ENCODE measurements at regions of chr1 and their contacts with region 1.

Region 1: DNA sequence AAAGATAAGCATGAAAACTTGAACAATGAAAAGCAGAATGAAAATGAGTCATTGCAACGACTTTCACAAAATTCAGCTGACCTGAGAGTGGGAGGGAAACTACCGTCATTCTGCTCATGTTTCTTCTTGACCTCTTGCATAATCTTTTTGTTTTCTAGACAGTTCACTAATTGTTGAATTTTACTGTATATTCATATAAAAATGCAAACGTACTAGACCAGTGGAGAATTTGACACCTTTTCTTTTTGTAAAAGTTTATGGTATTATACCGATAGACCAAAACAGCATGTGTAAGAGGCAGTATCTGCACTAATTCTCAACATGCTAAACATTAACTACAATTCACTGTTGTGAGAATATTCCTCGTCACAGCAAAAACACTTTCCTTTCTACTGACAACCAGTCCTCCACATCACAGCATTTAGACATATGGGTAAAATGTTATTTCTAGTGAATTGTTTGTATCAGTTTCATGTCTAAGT is 137.8 kb downstream of the GREM2 start:
- DNase-seq: peak in 1 of 2 experiments; percentile 30
- H3K4me3 ChIP-seq: no peak overlapping the region
- H3K4me3 Mint-ChIP-seq: peak overlapping the region; percentile 33
- H3K27ac Mint-ChIP-seq: peak overlapping the region; percentile 54
- H3K4me1 ChIP-seq: peaks cover 26% of the 10 kb centered on the region
- H3K4me1 Mint-ChIP-seq: peaks cover 13% of the 10 kb centered on the region
- H3K27me3 ChIP-seq: no peaks in the 10 kb centered on the region
- H3K27me3 Mint-ChIP-seq: no peaks in the 10 kb centered on the region
- CTCF ChIP-seq: no peak

Region 2: GRCh38 chr1:240332672-240333071 is 141.5 kb before region 1 on chr1:
- CTCF ChIA-PET with region 1: no interaction called
- POLR2A ChIA-PET with region 1: no interaction called
- intact Hi-C with region 1: no loop called
- DNase-seq: no peak
- H3K4me3 ChIP-seq: no peak overlapping the region
- H3K4me3 Mint-ChIP-seq: no peak overlapping the region
- H3K27ac Mint-ChIP-seq: no peak overlapping the region
- H3K4me1 ChIP-seq: no peaks in the 10 kb centered on the region
- H3K4me1 Mint-ChIP-seq: no peaks in the 10 kb centered on the region
- H3K27me3 ChIP-seq: no peaks in the 10 kb centered on the region
- H3K27me3 Mint-ChIP-seq: no peaks in the 10 kb centered on the region
- CTCF ChIP-seq: no peak

Region 3: DNA sequence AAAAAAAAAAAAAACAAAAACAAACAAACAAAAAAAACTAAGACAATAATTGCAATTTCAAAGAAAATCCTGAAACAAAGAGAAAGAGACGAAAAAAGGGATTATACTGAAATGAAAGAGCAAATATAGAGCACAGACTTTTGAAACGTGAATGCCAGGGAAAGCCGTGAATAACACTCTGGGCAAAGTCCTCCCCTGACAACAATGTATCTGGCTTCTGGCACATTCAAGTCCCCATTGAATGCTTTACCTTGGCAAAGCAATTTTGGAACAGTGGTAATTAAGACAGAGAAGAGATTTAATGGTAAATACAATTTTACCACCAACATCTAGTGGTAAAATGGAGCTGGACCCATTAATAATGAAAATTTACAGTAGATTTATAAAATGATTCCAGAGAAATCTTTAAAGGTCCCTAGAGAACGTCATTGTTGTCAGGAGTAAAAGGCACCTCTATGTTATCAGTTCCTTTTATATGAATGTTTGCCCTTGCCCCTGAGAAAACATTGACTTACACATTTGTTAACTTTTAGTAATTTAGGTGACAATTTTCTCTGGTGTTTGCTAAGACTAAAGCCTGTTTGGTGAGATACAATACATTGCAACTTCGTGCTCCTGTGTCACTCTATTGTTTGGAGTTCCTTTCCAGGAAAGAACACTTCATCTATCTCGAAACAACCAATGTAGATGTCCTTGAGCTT is 48.1 kb after region 1 on chr1:
- CTCF ChIA-PET with region 1: no interaction called
- POLR2A ChIA-PET with region 1: no interaction called
- intact Hi-C with region 1: loop called (anchors 1 kb)
- DNase-seq: peak in 1 of 2 experiments; percentile 39
- H3K4me3 ChIP-seq: no peak overlapping the region
- H3K4me3 Mint-ChIP-seq: peak overlapping the region; percentile 61
- H3K27ac Mint-ChIP-seq: peak overlapping the region; percentile 87
- H3K4me1 ChIP-seq: peaks cover 12% of the 10 kb centered on the region
- H3K4me1 Mint-ChIP-seq: peaks cover 16% of the 10 kb centered on the region
- H3K27me3 ChIP-seq: no peaks in the 10 kb centered on the region
- H3K27me3 Mint-ChIP-seq: no peaks in the 10 kb centered on the region
- CTCF ChIP-seq: no peak